ENCODE measurements at regions of chr1 and their contacts with region 1.

Region 1: DNA sequence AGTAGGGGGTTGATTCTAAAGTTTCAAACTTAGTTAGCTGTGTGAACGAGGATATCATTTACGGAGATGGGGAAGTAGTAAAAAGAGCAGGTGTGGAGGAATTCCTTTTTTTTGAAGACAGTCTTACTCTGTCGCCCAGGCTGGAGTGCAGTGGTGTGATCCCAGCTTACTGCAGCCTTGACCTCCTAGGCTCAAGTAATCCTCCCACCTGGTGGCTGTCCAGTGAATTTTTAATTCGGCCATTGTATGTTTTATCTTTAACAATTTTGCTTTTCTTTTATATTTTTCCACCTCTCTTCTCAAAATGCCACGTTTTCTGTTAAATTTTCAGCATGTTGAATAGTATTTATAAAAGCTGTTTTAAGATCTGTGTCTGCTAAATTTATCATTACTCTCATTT is 12.3 kb upstream of the CENPF start:
- DNase-seq: no peak
- ATAC-seq: no peak
- H3K4me3 Mint-ChIP-seq: no peak overlapping the region
- H3K27ac Mint-ChIP-seq: no peak overlapping the region
- H3K4me1 Mint-ChIP-seq: no peaks in the 10 kb centered on the region
- H3K27me3 Mint-ChIP-seq: peaks cover 9% of the 10 kb centered on the region

Region 2: GRCh38 chr1:214602764-214603657 is 12.3 kb after region 1 on chr1 and contains the start of gene CENPF:
- CTCF ChIA-PET with region 1: interaction called, 4 read pairs
- POLR2A ChIA-PET with region 1: interaction called, 11 read pairs
- DNase-seq: peak; percentile 97
- ATAC-seq: peak; percentile 98
- H3K4me3 Mint-ChIP-seq: peak within 1 kb of the TSS; percentile 92
- H3K27ac Mint-ChIP-seq: peak within 1 kb of the TSS; percentile 96
- H3K4me1 Mint-ChIP-seq: peaks cover 25% of the 10 kb centered on the region
- H3K27me3 Mint-ChIP-seq: no peaks in the 10 kb centered on the region
- total RNA-seq, gene CENPF: 176 to 180 TPM

Region 3: DNA sequence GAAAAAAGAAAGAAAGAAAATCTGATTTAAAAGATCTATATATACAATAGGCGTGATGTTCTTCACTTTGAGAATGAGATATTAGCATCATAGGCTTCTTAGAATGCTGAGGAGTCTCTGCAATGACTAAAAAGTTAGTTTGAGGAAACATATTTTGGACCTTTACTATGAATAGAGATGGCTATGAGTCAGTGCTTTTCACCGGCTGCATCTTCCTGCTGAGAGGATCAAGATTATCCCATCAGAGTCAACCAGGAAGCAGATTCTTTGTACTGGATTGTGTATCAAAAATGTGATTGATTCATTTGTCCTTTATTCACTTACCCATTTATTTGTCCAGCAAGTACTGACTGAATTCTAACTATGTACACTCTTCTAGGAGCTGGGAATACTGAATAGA is 636.1 kb after region 1 on chr1:
- CTCF ChIA-PET with region 1: no interaction called
- POLR2A ChIA-PET with region 1: no interaction called
- DNase-seq: no peak
- ATAC-seq: no peak
- H3K4me3 Mint-ChIP-seq: no peak overlapping the region
- H3K27ac Mint-ChIP-seq: no peak overlapping the region
- H3K4me1 Mint-ChIP-seq: no peaks in the 10 kb centered on the region
- H3K27me3 Mint-ChIP-seq: no peaks in the 10 kb centered on the region